ENCODE measurements at regions of chr6 and their contacts with region 1.

Region 1: DNA sequence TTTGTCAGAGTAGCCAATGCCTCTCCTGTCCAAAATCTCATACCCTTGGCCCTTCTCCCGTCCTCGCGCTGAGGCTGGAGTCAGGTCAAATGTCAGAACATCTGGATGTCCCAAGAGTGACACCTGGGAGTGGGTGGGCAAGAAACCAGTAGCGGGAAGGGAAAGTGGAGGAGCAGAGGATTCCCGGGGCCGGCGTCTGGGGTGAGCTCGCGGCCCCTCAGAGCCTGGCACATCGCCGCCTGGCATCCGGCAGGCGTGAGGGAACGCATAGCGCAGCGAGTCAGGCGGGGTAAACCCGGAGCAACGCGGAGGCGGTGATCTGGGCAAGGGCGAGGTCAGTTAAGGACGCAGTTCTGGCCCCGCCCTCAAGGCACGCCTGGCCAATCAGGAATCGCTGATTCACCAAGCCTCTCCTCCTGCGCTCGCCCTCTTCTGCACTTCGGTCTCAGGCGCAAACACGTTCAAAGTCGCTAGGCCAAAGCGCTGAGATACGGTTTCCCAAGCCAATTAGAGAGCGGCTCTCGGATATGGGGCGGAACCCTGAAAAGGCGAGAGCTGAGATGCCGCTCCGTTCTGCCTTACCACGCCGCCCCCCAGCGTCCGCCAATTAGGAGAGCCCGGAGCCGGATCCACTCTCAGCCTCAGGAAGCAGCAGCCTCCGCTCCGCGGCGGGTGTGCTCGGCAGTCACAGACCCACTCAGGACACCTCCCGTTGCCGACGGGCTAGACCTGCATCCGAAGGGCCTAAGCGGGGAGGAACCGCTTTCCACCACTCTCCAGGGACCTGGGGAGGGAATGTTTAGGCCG is 22.5 kb downstream of the VPS52 start:
- DNase-seq: peak; percentile 96 to 98
- H3K4me3 ChIP-seq: peak overlapping the region; percentile 49
- H3K4me3 Mint-ChIP-seq: peak overlapping the region; percentile 85
- H3K27ac Mint-ChIP-seq: peak overlapping the region; percentile 75
- H3K4me1 ChIP-seq: peaks cover 5% of the 10 kb centered on the region; the same call in 1 of the 2 replicates
- H3K4me1 Mint-ChIP-seq: peaks cover 10% of the 10 kb centered on the region
- H3K27me3 ChIP-seq: no peaks in the 10 kb centered on the region
- H3K27me3 Mint-ChIP-seq: no peaks in the 10 kb centered on the region
- CTCF ChIP-seq: peak in 1 of 2 experiments; percentile 3

Region 2: GRCh38 chr6:32855467-32856174 is 393.5 kb before region 1 on chr6:
- CTCF ChIA-PET with region 1: no interaction called
- POLR2A ChIA-PET with region 1: no interaction called
- intact Hi-C with region 1: no loop called
- DNase-seq: no peak
- H3K4me3 ChIP-seq: no peak overlapping the region
- H3K4me3 Mint-ChIP-seq: peak overlapping the region; percentile 27
- H3K27ac Mint-ChIP-seq: no peak overlapping the region
- H3K4me1 ChIP-seq: peaks cover 6% of the 10 kb centered on the region
- H3K4me1 Mint-ChIP-seq: peaks cover 16% of the 10 kb centered on the region
- H3K27me3 ChIP-seq: peaks cover 1% of the 10 kb centered on the region
- H3K27me3 Mint-ChIP-seq: peaks cover 24% of the 10 kb centered on the region
- CTCF ChIP-seq: no peak

Region 3: DNA sequence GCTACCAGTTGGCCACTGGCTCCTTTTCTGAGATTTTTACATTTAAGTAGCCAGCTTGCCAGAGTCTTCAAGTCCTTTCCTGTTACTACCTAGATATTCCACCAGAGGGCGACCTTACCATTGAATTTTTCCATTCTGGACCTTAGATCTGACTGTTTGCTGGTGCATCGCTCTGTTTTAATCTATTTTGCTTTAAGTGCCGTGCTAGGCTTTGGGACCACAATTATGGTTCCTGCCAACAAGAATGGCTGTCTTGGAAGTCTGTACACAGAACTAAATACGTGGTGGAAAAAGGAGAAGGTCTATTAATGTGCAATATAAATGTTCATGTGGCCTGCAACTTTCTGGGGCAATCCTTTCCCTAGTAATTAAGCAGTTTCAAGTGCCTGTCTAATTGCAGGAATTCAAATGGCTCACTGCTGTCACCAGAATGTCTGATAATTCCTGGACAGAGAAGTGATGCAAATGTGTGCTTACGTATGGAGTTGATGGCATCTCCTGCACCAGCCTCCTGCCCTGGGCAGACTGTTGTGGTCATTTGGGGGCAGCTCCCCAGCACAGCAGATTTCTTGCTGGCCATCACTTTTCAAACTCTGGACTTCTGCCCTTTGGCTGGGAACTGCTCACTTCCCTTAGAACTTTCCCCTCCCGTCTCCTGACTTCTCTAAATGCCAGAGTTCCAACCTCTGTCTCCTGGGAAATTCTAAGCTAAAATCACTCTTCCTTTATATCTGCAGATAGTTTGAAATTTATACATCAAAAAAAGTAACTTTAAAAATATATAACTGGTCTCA is 234.1 kb before region 1 on chr6:
- CTCF ChIA-PET with region 1: no interaction called
- POLR2A ChIA-PET with region 1: no interaction called
- intact Hi-C with region 1: loop called (anchors 1 kb)
- DNase-seq: peak; percentile 51 to 74
- H3K4me3 ChIP-seq: no peak overlapping the region
- H3K4me3 Mint-ChIP-seq: no peak overlapping the region
- H3K27ac Mint-ChIP-seq: no peak overlapping the region
- H3K4me1 ChIP-seq: 0 out of 2 replicates have a peak, but pooled peaks cover 3% of the 10 kb centered on the region
- H3K4me1 Mint-ChIP-seq: no peaks in the 10 kb centered on the region
- H3K27me3 ChIP-seq: no peaks in the 10 kb centered on the region
- H3K27me3 Mint-ChIP-seq: peaks cover 21% of the 10 kb centered on the region
- CTCF ChIP-seq: peak; percentile 57 to 75

Region 4: DNA sequence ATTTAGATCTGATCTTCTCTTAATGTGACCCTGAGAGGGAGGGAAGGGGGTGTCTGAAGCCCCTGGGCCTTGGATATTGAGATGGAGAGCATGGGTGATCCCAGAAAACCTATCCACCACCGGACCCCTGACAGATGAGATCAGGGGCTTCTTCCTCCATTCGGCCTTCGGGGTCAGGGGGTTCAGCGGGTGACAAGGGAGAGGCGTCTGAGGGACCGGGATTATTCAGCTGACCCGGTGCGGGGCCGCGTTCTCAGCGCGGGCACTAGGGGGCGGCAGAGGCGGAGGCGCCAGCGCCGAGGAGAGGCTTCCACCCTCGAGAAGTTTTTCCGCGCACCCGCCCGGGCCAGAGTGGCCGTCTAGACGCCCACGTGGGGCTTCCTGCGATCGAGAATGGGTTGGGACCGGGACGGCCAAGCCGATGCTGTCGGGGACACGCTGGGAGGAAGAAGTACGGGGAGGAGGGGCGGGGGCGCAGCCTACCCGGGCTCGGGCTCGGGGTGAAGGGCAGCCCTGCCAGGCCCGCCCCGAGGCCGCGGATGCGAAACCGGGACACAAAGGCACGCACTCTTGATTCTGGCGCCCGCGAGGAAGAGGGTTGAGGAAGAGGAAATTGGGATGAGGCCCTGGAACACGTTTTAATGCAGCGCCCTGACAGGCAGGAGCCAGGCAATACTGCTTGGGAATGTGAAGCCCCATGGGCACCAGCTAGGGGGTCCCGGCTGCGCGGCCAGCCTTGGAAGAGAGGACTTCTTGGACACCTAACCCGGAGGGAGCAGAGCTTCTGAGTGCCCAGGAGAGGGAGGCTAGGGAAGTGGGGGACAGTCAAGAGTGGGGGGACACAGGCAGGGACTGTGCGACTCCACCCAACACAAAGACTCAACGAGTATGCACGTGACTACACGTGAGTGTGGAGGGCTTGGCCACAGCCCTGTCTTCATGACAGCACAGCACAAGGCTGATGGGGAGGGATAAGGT is 87.5 kb before region 1 on chr6:
- CTCF ChIA-PET with region 1: interaction called, 8 read pairs
- POLR2A ChIA-PET with region 1: no interaction called
- intact Hi-C with region 1: loop called (anchors 1 kb)
- DNase-seq: peak; percentile 65 to 86
- H3K4me3 ChIP-seq: peak overlapping the region; percentile 50
- H3K4me3 Mint-ChIP-seq: peak overlapping the region; percentile 80
- H3K27ac Mint-ChIP-seq: peak overlapping the region; percentile 65
- H3K4me1 ChIP-seq: no peaks in the 10 kb centered on the region
- H3K4me1 Mint-ChIP-seq: peaks cover 12% of the 10 kb centered on the region
- H3K27me3 ChIP-seq: no peaks in the 10 kb centered on the region; the same call in 1 of the 2 replicates
- H3K27me3 Mint-ChIP-seq: peaks cover 8% of the 10 kb centered on the region
- CTCF ChIP-seq: peak; percentile 85 to 92

Region 5: DNA sequence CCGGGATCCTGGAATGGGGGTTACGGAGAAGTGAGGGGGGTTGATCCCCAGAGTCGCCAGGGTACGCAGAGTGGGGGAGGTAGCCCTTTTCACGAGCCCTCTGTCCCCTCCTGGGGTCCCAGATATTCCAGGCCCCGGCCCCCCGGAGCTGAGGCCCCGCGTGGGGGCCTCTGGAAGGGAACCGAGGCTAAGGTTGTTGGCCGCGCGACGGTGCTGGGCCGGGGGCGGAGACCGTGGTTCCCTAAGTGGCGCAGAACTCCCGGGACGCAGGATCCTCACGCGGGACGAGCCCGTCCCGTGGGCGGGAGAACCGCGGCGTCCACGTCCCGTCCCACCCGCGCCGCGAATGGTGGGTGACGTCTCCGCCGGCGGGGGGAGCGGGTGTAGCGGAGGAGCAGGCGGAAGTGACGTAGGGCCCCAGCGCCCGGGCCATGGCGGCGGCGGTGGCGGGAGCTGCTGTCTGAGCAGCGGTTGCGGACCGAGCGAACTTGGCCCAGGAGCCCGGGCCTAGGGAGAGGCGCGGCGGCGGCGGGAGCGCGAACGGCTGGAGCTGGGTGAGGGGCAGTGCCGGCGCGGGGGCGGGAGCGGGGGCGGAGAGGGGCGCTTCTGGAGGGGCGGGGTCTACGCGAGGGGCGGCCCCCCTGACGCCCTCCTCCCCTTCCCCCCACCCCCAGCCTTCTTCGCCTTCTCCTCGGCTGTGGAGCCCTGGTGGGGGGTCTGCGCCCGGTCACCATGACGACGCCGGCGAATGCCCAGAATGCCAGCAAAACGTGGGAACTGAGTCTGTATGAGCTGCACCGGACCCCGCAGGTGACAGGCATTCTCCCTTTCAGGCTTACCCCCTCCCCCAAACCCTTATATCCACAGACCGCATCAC is 40.8 kb before region 1 on chr6 and contains the start of gene RING1:
- CTCF ChIA-PET with region 1: interaction called, 15 read pairs
- POLR2A ChIA-PET with region 1: interaction called, 7 read pairs
- intact Hi-C with region 1: loop called (anchors 1 kb)
- DNase-seq: peak; percentile 68 to 81
- H3K4me3 ChIP-seq: peak within 1 kb of the TSS; percentile 88
- H3K4me3 Mint-ChIP-seq: peak within 1 kb of the TSS; percentile 98
- H3K27ac Mint-ChIP-seq: peak within 1 kb of the TSS; percentile 97
- H3K4me1 ChIP-seq: peaks cover 14% of the 10 kb centered on the region
- H3K4me1 Mint-ChIP-seq: peaks cover 34% of the 10 kb centered on the region
- H3K27me3 ChIP-seq: no peaks in the 10 kb centered on the region
- H3K27me3 Mint-ChIP-seq: peaks cover 5% of the 10 kb centered on the region
- CTCF ChIP-seq: no peak
- total RNA-seq, gene RING1: 31.3 and 32.0 TPM in 2 replicates

Region 6: DNA sequence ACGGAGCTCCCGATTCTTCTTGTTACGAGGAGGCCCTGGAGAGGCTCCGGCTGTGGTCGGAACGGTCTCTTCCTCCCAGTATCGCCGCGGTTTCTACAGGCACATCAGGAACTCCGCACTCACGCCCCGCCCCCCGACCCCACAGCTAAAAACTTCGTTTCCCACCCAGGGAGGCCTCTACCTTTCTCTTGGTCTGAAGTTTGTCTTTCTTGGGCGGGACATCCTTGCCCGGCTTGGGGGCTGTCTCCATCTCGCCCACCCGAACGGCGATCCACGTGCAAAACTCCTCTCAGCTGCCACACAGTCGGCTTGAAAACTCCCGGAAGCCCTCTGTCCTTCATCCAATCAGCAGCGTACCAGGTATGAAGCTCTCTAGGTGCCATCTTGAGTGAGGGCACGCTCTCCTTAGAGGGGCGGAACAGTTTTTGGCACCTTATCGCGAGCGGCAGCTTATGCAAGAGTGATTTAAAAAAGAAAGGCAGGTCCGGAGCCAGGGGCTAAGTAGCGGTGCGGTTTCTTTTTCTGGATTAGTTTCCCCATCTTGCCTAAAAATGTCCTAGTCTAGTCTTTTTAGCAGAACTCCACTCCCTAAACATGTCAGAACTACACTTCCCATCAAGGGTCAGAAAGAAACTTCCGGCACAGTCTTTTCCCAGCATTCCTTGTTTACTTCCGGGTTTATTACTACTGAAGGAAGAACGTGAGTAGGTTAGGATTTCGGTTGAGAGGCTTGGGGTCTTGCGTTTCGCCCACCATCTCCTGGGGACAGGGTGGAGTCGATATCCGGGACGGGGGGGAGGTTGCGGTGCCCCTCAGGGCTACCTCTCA is 40.0 kb after region 1 on chr6 and contains the starts of genes PFDN6 and WDR46:
- CTCF ChIA-PET with region 1: no interaction called
- POLR2A ChIA-PET with region 1: interaction called, 18 read pairs
- intact Hi-C with region 1: no loop called
- DNase-seq: peak; percentile 79 to 83
- H3K4me3 ChIP-seq: peak within 1 kb of the TSS; percentile 65
- H3K4me3 Mint-ChIP-seq: peak within 1 kb of the TSS; percentile 87
- H3K27ac Mint-ChIP-seq: peak within 1 kb of the TSS; percentile 94
- H3K4me1 ChIP-seq: peaks cover 7% of the 10 kb centered on the region; the same call in 1 of the 2 replicates
- H3K4me1 Mint-ChIP-seq: peaks cover 13% of the 10 kb centered on the region
- H3K27me3 ChIP-seq: no peaks in the 10 kb centered on the region
- H3K27me3 Mint-ChIP-seq: no peaks in the 10 kb centered on the region
- CTCF ChIP-seq: no peak
- total RNA-seq, gene PFDN6: 65.9 and 81.8 TPM in 2 replicates
- total RNA-seq, gene WDR46: 58.2 and 62.2 TPM in 2 replicates